ENCODE measurements at regions of chr6 and their contacts with region 1.

Region 1: GRCh38 chr6:16319813-16320532 is 81.6 kb downstream of the GMPR start:
- DNase-seq: peak; percentile 92 to 96
- ATAC-seq: peak; percentile 73 to 74
- H3K4me3 ChIP-seq: peak overlapping the region; percentile 36 to 55 (median 50)
- H3K27ac ChIP-seq: peak overlapping the region; percentile 93 to 100 (median 96)
- H3K4me1 ChIP-seq: peaks cover 69 to 84% of the 10 kb centered on the region in 2 donors
- H3K27me3 ChIP-seq: no peaks in the 10 kb centered on the region
- CTCF ChIP-seq: no peak
- POLR2A ChIP-seq: peak in 1 of 2 donors; percentile 61

Region 2: DNA sequence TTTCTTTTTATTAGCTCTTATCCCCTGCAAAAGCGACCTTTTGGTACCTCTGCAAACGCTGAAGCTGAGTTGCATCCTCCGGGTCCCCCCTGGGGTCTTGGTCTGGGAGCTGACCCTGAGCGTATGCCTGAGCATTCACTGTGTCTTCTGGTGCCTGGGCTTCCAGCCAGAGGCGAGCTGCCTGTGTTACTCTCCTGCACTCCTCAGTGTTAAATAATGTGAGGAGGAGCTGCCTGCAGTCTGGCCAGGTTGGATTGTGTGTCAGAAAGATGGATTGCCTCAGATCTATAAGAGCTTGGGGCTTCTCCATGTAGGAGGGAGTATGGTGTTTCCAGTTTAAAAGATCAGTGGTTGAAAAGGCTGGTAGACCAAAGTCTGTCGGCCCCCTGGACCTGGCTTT is 90.3 kb before region 1 on chr6:
- in situ Hi-C with region 1: loop called in 2 of 4 experiments (anchors 5 to 10 kb)
- intact Hi-C with region 1: no loop called
- DNase-seq: no peak
- ATAC-seq: peak in 1 of 2 donors; percentile 6
- H3K4me3 ChIP-seq: no peak overlapping the region
- H3K27ac ChIP-seq: peak overlapping the region in 1 of 4 donors; percentile 25
- H3K4me1 ChIP-seq: peaks cover 8 to 14% of the 10 kb centered on the region in 2 donors
- H3K27me3 ChIP-seq: no peaks in the 10 kb centered on the region
- CTCF ChIP-seq: no peak
- POLR2A ChIP-seq: no peak

Measured in gastrocnemius medialis (tissue), 4 donors.